Adrenal gland (tissue), 19 donors: ENCODE measurements at regions of chr2 and their contacts with region 1.

Region 1: GRCh38 chr2:99442837-99443236 is 47.0 kb downstream of the REV1 start:
- DNase-seq: peak in 2 of 7 donors; percentile 11 to 21
- H3K4me3 ChIP-seq: no peak overlapping the region
- H3K27ac ChIP-seq: no peak overlapping the region
- H3K4me1 ChIP-seq: no peaks in the 10 kb centered on the region
- H3K27me3 ChIP-seq: no peaks in the 10 kb centered on the region
- CTCF ChIP-seq: peak in 5 of 6 experiments; percentile 24 to 62 (median 56)
- POLR2A ChIP-seq: no peak

Region 2: DNA sequence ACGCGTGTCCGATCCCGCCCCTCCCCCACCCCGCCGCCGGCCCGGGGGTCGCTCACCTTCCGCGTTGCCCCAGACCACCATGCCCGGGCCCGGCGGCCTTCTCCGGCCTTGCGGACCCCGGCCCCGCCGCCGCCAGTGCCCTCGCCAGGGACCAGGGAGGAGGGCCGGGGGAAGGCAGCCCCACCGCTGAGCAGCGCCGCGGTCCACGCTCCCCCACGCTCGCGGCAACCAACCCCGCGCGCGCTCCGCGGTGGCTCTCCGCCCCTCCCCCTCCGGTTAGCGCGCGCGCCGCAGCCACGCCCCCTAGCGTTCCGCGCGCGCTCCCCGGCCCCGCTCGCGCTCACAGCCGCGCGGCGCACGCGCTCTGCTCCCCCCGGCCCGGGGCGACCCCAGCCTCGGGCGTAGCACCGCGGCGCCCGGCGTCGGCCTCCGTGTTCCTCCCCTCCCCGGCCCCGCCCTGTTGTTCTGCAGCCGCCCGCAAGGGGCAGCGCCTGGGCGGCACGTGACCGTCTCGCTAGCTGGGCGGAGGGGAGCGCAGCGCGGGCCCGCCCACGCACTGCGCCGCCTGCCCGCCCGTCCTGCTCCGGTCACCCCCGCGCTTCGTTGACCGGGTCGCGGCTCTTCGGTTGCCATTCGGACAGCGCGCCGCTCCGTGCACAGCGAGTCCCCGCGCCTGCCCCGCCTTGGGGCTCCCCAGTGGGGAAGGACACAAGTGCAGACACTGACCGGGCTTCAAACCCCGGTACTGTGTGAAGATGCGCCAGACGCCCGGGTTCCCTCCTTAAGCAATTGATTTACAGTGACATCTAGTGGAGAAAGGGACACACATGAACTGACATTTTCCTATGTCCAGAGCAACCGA is 47.2 kb after region 1 on chr2 and contains the start of gene REV1:
- intact Hi-C with region 1: loop called in 1 of 2 experiments (anchors 2 kb)
- DNase-seq: peak; percentile 91 to 96 (median 93)
- H3K4me3 ChIP-seq: peak within 1 kb of the TSS; percentile 60 to 99 (median 76)
- H3K27ac ChIP-seq: peak within 1 kb of the TSS; percentile 39 to 100 (median 97)
- H3K4me1 ChIP-seq: peaks cover 14 to 39% of the 10 kb centered on the region in 2 donors
- H3K27me3 ChIP-seq: no peaks in the 10 kb centered on the region
- CTCF ChIP-seq: peak; percentile 66 to 95 (median 94)
- POLR2A ChIP-seq: peak; percentile 1 to 48
- total RNA-seq, gene REV1: 20.9 to 90.8 (median 48.6) TPM